PC-9 (cell line): ENCODE measurements at regions of chr12 and their contacts with region 1.

Region 1: DNA sequence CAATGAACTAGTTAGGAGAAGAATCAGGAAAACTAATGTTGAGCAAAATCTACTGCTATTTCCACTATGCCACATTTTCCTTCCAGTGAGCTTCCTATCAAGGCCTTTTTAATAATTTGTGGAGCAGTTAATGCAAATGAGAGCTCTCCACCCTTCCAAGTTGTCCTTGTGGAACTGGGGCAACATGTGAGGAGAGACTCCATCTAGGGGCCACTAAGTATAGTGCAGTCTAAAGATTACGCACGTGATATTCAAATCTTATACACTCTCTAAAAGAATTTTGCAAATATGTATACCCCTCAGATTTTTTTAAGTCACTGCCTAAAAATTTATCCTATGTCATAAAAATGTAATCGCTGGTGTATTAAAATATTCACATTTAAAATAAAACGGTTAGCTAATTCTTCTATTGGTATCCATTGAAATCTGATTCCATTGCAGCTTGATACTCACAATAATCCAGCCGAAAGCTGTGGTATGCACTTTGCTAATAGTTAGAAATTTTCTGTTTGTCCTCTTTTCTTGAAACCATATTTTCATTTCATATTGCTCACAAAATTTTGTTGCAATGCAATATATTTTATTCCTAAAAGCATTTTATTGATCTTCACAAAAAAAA is 100.1 kb downstream of the PAH start:
- DNase-seq: no peak
- H3K4me3 ChIP-seq: no peak overlapping the region
- H3K27ac ChIP-seq: no peak overlapping the region
- H3K4me1 ChIP-seq: no peaks in the 10 kb centered on the region
- H3K27me3 ChIP-seq: no peaks in the 10 kb centered on the region
- CTCF ChIP-seq: peak; percentile 77

Region 2: GRCh38 chr12:102061560-102062418 is 755.1 kb before region 1 on chr12 and contains the start of gene WASHC3:
- CTCF ChIA-PET with region 1: no interaction called
- POLR2A ChIA-PET with region 1: interaction called, 10 read pairs
- intact Hi-C with region 1: no loop called
- DNase-seq: peak; percentile 84 to 88
- H3K4me3 ChIP-seq: peak within 1 kb of the TSS; percentile 78
- H3K27ac ChIP-seq: peak within 1 kb of the TSS; percentile 45; the same call in 1 of the 2 replicates
- H3K4me1 ChIP-seq: peaks cover 6% of the 10 kb centered on the region; the same call in 1 of the 2 replicates
- H3K27me3 ChIP-seq: no peaks in the 10 kb centered on the region
- CTCF ChIP-seq: no peak
- total RNA-seq, gene WASHC3: 20.9 and 29.7 TPM in 2 replicates

Region 3: DNA sequence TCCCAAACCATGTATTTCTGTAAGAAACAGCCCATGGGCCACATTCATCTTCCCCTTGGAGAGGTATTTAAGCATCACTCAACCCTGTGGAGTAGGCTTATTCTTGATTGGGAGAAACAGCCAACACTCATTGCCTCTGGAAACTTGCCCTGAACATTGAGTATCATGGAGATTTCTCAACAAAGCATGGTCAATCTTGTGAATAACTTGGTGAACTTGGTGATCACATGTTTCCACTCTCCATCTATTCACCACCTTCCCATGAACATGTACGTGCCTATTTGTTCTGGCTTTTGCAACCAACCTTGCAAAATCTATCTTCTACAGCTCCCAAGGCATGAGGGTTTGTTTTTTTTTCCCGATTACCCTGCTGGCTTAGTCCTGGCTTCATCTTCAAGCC is 63.1 kb before region 1 on chr12:
- CTCF ChIA-PET with region 1: no interaction called
- POLR2A ChIA-PET with region 1: no interaction called
- intact Hi-C with region 1: no loop called
- DNase-seq: no peak
- H3K4me3 ChIP-seq: no peak overlapping the region
- H3K27ac ChIP-seq: no peak overlapping the region
- H3K4me1 ChIP-seq: no peaks in the 10 kb centered on the region
- H3K27me3 ChIP-seq: peaks cover 8% of the 10 kb centered on the region; the same call in 1 of the 2 replicates
- CTCF ChIP-seq: no peak